GM13976 (cell line): ENCODE measurements at regions of chr5 and their contacts with region 1.

Region 1: DNA sequence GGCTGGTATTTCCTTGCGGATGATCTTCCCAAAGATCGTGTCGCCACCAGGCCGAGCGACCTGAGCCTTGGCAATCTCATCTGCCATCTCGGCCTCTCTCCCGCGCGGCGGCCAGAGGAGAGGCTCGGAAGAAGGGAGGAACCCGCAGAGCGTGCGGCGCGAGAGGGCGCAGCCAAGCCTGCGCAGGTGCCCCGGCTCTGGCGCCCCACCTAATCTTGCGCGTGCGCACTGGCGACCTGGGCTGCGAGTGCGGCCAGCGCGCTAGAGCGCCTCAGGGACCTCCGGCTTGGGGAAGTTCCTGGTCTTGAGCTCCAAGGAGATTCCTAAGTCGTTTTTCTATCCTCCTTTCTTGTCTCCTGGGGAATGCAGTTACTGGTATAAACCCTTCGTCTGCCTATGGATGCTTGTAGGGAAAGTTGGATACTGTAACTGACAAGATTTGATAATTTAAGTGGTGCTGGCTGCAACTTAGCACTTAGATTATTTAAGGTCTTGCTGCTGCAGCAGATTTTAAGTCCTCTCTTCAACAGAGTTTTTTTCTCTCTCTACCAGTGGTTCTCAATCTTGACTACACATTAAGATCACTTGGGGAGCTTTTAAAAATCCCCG is at the start of gene HINT1:
- DNase-seq: peak; percentile 96
- CTCF ChIP-seq: peak; percentile 33

Region 2: DNA sequence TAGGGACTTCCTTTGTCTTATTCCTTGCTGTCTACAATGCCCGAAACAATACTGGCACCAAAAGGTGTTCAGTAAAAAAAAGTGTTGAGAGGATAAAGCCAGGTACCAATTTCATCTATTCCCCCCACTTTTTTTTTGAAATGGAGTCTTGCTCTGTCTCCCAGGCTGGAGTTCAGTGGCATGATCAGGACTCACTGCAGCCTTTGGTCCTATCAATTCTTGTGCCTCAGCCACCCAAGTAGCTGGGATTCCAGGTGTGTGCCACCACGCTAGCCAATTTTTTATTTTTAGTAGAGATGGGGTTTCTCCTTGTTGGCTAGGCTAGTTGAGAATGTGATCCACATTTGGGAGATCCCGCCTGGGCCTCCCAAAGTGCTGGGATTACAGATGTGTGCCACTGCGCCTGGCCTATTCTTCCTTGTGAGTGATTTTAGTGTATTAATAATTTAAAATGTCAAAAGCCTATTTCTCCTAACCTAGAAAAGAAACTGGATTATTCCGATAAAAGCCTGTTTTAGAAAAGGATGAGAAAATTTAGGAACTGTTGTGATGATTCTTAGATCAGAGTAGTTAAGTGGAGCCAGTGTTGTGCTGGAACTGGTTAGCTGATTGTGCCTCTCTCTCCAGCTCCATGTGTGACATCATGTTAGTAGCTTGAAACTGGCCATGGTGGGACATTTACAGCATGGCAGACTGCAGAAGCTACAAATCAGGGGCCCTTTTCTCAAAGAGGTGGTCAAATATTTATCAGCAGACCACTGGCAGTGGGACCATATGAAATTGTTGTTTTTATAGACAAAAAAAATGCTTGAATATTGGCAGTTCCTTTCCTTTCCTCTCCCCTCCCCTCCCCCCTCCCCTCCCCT is 112.9 kb after region 1 on chr5:
- in situ Hi-C with region 1: loop called (anchors 10 kb)
- DNase-seq: no peak
- CTCF ChIP-seq: no peak

Region 3: GRCh38 chr5:131328536-131329285 is 163.5 kb after region 1 on chr5:
- in situ Hi-C with region 1: no loop called
- DNase-seq: no peak
- CTCF ChIP-seq: no peak

Region 4: DNA sequence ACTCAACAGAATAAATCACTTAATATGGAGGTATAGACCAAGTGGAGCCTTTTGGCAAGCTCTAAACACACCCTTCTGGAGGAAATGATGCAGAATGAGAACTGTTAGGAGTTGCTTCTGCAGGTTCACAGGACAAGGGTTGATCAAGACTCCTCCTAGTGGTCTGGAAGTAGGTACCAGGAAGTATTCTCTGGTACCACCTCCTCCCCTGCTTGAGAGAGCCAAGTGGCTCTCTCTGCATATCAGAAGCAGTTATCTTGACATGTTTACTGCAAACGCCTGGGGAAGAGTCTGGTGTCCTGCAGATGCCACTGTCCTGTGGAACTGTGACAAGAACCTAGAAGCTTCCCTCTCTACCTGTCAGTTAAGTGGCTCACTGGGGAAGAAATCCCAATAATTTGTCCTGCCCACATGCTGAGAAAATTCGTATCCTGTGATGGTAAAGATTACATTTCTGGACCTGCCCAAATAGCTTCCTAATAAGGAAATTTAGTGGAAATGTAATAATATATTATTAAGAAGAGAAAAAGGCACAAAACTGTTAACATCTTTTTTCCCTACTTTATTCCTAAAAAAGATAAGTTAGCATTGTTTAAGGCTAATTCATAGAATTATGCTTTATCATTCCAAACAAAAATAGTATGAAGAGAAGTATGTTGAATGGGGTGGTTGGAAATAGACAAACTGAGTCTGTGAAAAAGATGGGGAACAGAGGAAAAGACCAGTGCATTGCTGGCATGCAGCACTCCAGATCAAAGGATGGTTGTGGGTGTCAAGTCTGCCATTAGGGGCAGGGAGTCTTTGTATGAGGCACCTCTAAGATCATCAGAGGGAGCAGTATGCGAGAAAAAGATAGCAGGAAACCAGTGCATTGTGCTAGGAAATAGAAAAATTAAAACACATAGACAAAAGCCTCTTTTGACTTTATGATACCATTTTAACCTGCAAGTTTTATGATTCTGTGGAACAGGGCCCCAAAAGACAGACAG is 217.5 kb after region 1 on chr5:
- in situ Hi-C with region 1: loop called (anchors 25 kb)
- DNase-seq: peak; percentile 38
- CTCF ChIP-seq: peak; percentile 49

Region 5: DNA sequence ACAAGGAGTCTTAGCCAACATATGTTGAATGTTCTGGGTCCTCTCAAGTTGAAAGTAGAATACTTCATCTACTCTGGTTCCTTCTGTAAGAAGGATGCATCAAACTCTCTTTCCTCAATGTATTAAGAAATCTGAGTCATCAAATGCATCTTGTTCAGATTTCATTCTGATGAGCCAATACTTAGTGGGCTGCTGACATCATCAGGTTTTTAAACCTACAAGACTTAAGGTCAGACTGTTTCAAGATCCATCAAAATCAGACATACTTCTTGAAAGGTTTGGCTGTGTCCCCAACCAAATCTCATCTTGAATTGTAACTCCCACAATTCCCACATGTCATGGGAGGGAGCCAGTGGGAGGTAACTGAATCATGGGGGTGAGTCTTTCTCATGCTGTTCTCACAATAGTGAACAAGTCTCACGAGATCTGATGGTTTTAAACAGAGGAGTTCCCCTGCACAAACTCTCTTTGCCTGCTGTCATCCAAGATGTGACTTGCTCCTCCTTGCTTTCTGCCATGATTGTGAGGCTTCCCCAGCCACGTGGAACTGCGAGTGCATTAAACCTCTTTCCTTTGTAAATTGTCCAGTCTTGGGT is 301.0 kb after region 1 on chr5:
- in situ Hi-C with region 1: no loop called
- DNase-seq: no peak
- CTCF ChIP-seq: no peak

Region 6: DNA sequence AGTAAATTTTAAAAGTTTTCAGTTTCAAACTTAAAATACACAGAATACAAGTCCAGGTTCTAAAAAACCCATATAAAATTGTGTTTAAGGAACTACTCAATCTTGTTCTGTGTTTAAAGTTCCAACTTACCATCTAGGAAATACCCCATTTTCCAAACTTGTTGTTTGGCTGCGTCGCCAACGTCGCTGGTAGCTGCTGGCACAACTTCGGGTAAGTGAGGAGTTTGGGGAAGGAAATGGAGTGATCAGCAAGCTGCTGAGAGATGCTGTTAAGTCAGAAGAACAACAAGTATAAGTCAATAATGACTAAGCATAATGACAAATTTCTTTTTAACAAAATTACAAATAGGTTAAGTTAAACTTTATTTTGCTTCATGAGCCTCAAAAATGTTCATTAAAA is 541.1 kb after region 1 on chr5:
- in situ Hi-C with region 1: no loop called
- DNase-seq: no peak
- CTCF ChIP-seq: no peak